Spleen (tissue), 13 donors: ENCODE measurements at regions of chr21 and their contacts with region 1.

Region 1: DNA sequence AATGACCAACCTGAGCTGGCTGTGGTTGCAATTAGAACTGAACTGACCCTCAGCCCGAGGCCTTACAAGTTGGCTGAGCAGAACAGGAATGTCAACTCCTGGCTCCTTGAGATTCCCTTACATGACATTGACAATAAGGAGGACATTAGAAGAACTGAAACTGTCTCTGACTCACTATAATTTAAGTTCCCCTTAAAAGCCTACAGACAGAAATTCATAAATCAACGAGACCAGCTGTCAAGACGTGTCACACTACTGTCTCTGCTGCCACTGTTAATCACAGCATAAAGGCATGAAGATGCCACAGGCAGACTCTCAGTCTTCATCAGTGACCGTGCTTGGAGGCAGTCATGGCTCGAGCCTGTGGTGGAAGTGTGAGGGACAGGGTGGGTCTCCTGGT is 168.8 kb downstream of the GABPA start:
- DNase-seq: no peak
- H3K4me3 ChIP-seq: no peak overlapping the region
- H3K27ac ChIP-seq: peak overlapping the region in 3 of 8 donors; percentile 14 to 40 (median 34)
- H3K4me1 ChIP-seq: peaks cover 0 to 11% (median 7%) of the 10 kb centered on the region in 6 donors
- H3K27me3 ChIP-seq: no peaks in the 10 kb centered on the region
- CTCF ChIP-seq: no peak
- POLR2A ChIP-seq: no peak

Region 2: GRCh38 chr21:25664491-25664931 is 239.1 kb before region 1 on chr21:
- intact Hi-C with region 1: no loop called
- DNase-seq: no peak
- H3K4me3 ChIP-seq: no peak overlapping the region
- H3K27ac ChIP-seq: no peak overlapping the region
- H3K4me1 ChIP-seq: no peaks in the 10 kb centered on the region
- H3K27me3 ChIP-seq: no peaks in the 10 kb centered on the region
- CTCF ChIP-seq: no peak
- POLR2A ChIP-seq: no peak

Region 3: GRCh38 chr21:25717491-25718147 is 186.0 kb before region 1 on chr21:
- intact Hi-C with region 1: no loop called
- DNase-seq: no peak
- H3K4me3 ChIP-seq: no peak overlapping the region
- H3K27ac ChIP-seq: no peak overlapping the region
- H3K4me1 ChIP-seq: no peaks in the 10 kb centered on the region
- H3K27me3 ChIP-seq: no peaks in the 10 kb centered on the region
- CTCF ChIP-seq: no peak
- POLR2A ChIP-seq: no peak

Region 4: DNA sequence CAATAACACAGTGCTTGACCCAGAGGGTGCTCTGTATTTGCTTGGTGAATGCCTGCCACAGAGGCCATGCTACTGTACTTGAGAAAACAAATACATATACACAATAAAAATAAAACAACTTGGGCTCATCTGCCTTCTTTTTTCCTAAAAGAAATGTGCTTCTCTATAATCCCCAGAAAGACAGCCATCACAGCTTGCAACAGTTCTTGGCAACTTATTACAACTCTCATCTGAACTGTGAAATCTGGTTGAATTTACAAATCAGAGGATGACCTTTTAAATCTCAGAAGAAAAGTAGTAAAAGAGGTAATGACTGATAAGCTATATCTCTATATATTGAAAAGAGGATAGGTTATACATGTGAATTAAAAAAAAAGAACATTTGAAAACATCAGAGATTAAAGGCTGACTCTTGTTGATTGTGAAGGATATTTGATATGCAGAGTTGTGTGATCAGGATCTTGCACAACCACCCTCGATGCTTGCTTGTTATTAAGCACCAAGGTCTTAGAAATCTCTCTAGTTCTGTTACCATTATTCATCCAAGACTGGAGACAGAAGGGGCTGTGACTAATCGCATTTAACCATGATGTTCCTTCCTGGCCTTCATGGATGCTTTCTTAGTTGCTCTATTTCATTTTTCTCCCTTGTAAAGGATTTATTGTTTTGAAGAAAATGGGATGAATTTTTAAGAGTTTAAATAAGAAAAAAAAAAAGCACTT is 53.6 kb after region 1 on chr21:
- intact Hi-C with region 1: loop called (anchors 10 kb)
- DNase-seq: no peak
- H3K4me3 ChIP-seq: no peak overlapping the region
- H3K27ac ChIP-seq: no peak overlapping the region
- H3K4me1 ChIP-seq: peaks cover 0 to 18% (median 10%) of the 10 kb centered on the region in 6 donors
- H3K27me3 ChIP-seq: no peaks in the 10 kb centered on the region
- CTCF ChIP-seq: no peak
- POLR2A ChIP-seq: no peak